AG04450 (cell line): ENCODE measurements at regions of chr2 and their contacts with region 1.

Region 1: GRCh38 chr2:237456200-237456843 is 30.7 kb upstream of the MLPH start:
- DNase-seq: peak; percentile 97
- H3K4me3 ChIP-seq: no peak overlapping the region
- H3K27ac ChIP-seq: peak overlapping the region; percentile 93
- H3K27me3 ChIP-seq: no peaks in the 10 kb centered on the region
- CTCF ChIP-seq: 0 out of 2 replicates have a peak, but pooled peaks have one; percentile 9

Region 2: DNA sequence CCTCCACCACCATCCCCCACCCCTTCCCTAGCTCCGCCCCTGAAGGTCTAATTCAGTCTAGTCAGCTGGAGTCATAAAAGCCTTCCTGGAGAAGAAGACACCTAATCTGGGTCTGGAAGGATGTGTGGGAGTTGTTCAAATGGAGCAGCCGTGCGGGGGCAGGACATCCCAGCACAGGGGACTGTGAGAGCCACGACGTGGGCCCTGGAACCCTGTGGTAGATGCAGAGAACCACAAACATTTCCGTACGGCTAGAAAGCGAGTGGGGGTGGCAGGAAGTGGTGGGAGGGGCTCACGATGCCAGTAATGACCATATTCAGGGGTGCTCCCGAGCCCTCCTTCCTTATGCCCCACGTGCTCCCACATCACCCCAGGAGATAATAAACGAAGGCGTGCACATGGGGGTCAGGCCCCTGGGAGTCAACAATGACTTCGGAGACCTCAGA is 21.4 kb before region 1 on chr2:
- CTCF ChIA-PET with region 1: interaction called, 11 read pairs
- POLR2A ChIA-PET with region 1: interaction called, 4 read pairs
- DNase-seq: no peak
- H3K4me3 ChIP-seq: no peak overlapping the region
- H3K27ac ChIP-seq: peak overlapping the region; percentile 52
- H3K27me3 ChIP-seq: no peaks in the 10 kb centered on the region
- CTCF ChIP-seq: no peak

Region 3: GRCh38 chr2:237441605-237442274 is 14.6 kb before region 1 on chr2:
- CTCF ChIA-PET with region 1: interaction called, 15 read pairs
- POLR2A ChIA-PET with region 1: interaction called, 15 read pairs
- DNase-seq: peak; percentile 66
- H3K4me3 ChIP-seq: no peak overlapping the region
- H3K27ac ChIP-seq: no peak overlapping the region
- H3K27me3 ChIP-seq: no peaks in the 10 kb centered on the region
- CTCF ChIP-seq: no peak

Region 4: DNA sequence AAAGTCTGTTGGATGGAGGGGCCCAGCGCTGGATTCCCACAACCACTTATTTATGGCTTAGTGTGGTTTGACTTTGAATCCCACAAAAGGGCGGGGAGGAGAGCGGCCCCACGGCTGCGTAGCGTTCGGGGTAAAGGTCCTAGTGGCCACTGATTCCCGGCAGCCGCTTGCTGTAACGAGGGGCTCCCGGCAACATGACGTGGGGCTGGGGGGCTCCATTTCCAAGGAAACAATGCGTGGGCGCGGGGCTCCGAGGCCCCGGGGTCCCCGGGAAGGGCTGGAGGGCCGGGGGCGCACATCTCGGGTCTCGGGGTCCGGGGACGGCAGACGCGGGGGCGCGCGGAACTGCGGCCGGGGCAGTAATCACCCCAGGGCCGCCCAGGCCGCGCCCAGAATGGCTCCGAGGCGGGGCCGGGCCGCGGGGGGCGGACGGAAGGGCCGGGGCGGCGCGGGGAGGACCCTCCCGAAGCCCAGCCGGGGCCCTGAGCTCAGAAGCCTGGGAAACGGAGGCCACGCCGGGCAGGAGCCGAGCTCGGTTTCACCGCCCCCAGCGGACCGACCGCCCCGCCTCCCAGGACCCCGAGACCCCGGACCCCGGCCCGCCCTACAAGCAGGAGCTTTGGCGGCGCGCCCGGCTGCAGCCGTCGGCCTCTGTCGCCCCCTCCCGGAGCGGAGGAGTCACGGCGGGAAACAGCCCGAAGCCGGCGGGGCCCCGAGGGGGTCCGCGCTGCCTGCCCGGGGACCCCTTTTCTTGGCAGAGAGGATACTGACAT is 18.8 kb after region 1 on chr2:
- CTCF ChIA-PET with region 1: interaction called, 12 read pairs
- POLR2A ChIA-PET with region 1: interaction called, 6 read pairs
- DNase-seq: peak; percentile 51
- H3K4me3 ChIP-seq: peak overlapping the region; percentile 64
- H3K27ac ChIP-seq: peak overlapping the region; percentile 90
- H3K27me3 ChIP-seq: no peaks in the 10 kb centered on the region
- CTCF ChIP-seq: peak; percentile 74

Region 5: DNA sequence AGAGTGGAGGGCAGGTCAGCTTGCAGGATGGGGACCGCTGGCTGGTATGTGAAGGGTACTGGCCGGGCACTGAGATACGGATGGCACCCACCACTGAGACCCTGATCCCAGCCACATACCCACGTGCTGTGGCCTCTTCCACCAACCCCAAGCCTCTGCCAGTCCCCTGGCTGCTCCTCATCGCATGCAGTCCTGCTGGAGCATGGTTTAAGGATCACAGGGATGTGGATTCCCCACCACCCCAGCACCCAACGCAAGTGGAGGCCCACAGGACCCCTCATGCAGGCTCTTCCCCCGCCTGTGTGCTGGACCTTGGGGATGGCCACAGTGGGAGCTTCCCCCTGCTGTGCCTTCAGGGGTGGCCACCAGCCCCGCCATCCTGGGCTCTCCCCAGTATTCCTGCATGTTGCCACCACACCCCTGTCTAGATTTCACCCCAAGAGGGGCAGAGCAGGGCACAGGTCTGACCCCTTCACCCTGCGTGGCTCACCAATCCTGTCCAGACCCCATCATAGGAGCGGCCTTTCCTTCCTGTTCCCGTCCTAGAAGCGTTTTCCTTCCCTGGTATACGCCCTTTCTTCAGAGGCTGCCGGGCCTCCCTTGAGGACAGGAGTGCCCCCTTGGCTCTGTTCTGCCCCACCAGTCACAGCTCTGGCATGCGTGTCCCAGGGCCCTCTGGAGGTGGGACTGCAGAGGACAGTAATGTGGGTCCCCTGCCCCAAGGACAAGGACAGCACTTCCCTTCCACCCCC is 49.0 kb after region 1 on chr2:
- CTCF ChIA-PET with region 1: no interaction called
- POLR2A ChIA-PET with region 1: no interaction called
- DNase-seq: no peak
- H3K4me3 ChIP-seq: no peak overlapping the region
- H3K27ac ChIP-seq: no peak overlapping the region
- H3K27me3 ChIP-seq: no peaks in the 10 kb centered on the region
- CTCF ChIP-seq: no peak